Activated CD4-positive, alpha-beta T cell treated with anti-CD3 and anti-CD28 coated beads, Interleukin-2, amount 10 ng/mL, durations not matched to agents 7 days and 5 days (primary cell): ENCODE measurements at regions of chr3 and their contacts with region 1.

Region 1: DNA sequence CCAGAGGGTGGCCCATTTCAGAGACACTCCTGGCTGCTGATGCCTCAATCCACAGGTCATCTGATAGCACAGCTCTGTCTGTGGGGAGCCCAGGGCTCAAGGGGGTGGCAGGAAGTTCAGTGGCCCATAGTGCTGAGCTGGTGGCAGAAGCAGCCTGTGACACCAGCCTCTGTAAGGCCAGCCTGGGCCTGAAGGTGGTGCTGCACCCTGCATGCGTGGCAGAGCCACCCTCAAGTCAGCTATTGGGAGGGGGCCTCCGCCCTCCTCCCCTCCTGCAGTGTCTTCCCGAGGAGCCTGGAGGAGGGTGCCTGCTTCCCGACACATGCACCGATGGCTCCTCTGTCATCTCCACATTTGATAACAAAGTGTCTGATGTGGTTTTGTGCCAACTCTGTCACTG is 3.0 kb downstream of the PLA1A start:
- DNase-seq: no peak
- H3K4me3 Mint-ChIP-seq: no peak overlapping the region
- H3K27ac Mint-ChIP-seq: no peak overlapping the region
- H3K4me1 Mint-ChIP-seq: peaks cover 18% of the 10 kb centered on the region
- H3K27me3 Mint-ChIP-seq: peaks cover 3% of the 10 kb centered on the region

Region 2: DNA sequence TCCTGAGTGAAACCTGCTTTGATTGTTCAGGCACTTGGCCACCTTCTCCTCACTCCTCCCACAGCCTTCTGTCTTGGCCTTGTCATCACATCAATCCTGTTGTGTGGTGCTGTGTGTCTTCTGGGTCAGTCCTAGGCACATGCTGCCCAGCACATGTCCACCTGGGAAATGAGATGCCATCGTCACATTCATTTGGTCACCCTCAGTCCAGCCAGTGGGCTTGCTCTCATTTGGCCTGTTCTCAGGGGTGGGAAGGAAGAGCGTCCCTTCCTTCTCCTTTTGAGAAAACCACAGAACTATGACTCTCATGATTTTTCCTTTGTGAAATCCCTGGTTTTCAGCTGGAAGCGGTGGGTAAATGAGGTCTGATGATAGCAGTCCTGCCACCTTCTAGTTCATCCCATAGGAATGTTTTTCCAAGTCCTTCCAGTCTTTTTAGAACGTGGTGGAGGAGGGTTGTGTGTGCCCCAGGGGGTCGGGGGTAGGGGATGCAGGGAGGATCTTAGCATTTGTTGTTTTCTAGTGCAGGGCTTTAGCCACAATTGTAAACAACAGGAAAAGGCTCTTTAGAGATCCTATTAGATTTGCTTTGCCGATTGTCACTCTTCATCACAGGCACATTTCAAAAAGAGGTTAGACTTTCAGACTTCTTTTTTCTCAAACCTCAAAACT is 11.5 kb before region 1 on chr3:
- CTCF ChIA-PET with region 1: interaction called, 17 read pairs
- POLR2A ChIA-PET with region 1: no interaction called
- DNase-seq: no peak
- H3K4me3 Mint-ChIP-seq: no peak overlapping the region
- H3K27ac Mint-ChIP-seq: no peak overlapping the region
- H3K4me1 Mint-ChIP-seq: peaks cover 6% of the 10 kb centered on the region
- H3K27me3 Mint-ChIP-seq: peaks cover 7% of the 10 kb centered on the region

Region 3: GRCh38 chr3:119613201-119613600 is 12.5 kb after region 1 on chr3:
- CTCF ChIA-PET with region 1: interaction called, 26 read pairs
- POLR2A ChIA-PET with region 1: no interaction called
- DNase-seq: no peak
- H3K4me3 Mint-ChIP-seq: no peak overlapping the region
- H3K27ac Mint-ChIP-seq: no peak overlapping the region
- H3K4me1 Mint-ChIP-seq: no peaks in the 10 kb centered on the region
- H3K27me3 Mint-ChIP-seq: peaks cover 26% of the 10 kb centered on the region

Region 4: GRCh38 chr3:119628816-119629445 is 28.2 kb after region 1 on chr3:
- CTCF ChIA-PET with region 1: interaction called, 17 read pairs
- POLR2A ChIA-PET with region 1: no interaction called
- DNase-seq: no peak
- H3K4me3 Mint-ChIP-seq: no peak overlapping the region
- H3K27ac Mint-ChIP-seq: no peak overlapping the region
- H3K4me1 Mint-ChIP-seq: peaks cover 12% of the 10 kb centered on the region
- H3K27me3 Mint-ChIP-seq: peaks cover 7% of the 10 kb centered on the region

Region 5: DNA sequence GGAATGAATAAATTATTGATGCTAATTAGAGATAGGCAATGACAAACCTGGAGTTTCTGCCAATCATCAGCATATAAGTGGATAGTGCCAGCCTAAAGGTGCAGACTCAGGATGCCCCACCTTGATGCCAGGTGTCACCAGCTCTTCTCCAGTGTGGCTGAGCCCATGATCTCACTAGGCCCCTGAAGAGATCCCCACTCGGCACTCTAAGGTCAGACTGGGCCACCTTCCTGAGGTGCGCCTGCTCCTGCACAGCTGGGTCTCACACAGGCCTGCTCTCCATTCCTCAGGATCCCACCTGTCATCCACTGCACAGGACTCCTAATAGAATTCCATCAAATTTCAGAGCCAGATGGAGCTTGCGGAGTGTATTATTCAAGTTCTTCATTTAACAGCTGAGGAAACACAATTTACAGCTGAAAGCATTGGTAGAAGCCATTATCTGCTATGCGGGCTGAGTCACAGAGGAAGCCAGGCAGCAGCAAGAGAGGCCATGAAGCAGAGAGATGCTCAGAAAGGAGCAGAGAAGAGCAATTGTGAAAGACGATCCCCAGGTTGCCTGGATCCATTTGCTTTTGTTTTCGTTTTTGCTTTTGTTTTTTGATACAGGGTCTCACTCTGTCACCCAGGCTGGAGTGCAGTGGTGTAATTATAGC is 875.1 kb after region 1 on chr3:
- CTCF ChIA-PET with region 1: no interaction called
- POLR2A ChIA-PET with region 1: no interaction called
- DNase-seq: no peak
- H3K4me3 Mint-ChIP-seq: no peak overlapping the region
- H3K27ac Mint-ChIP-seq: no peak overlapping the region
- H3K4me1 Mint-ChIP-seq: no peaks in the 10 kb centered on the region
- H3K27me3 Mint-ChIP-seq: peaks cover 5% of the 10 kb centered on the region